BJ (cell line): ENCODE measurements at regions of chr4 and their contacts with region 1.

Region 1: GRCh38 chr4:147590249-147590920 is 26.8 kb upstream of the TMEM184C start:
- DNase-seq: no peak
- H3K4me3 ChIP-seq: no peak overlapping the region
- H3K27me3 ChIP-seq: no peaks in the 10 kb centered on the region
- CTCF ChIP-seq: peak; percentile 71

Region 2: GRCh38 chr4:147111033-147111367 is 479.4 kb before region 1 on chr4:
- CTCF ChIA-PET with region 1: interaction called, 14 read pairs
- POLR2A ChIA-PET with region 1: no interaction called
- DNase-seq: no peak
- H3K4me3 ChIP-seq: no peak overlapping the region
- H3K27me3 ChIP-seq: no peaks in the 10 kb centered on the region
- CTCF ChIP-seq: 0 out of 2 replicates have a peak, but pooled peaks have one; percentile 4

Region 3: GRCh38 chr4:147160908-147161513 is 429.4 kb before region 1 on chr4:
- CTCF ChIA-PET with region 1: interaction called, 35 read pairs
- POLR2A ChIA-PET with region 1: no interaction called
- DNase-seq: peak; percentile 5
- H3K4me3 ChIP-seq: no peak overlapping the region
- H3K27me3 ChIP-seq: no peaks in the 10 kb centered on the region
- CTCF ChIP-seq: peak; percentile 84